ENCODE measurements at regions of chr4 and their contacts with region 1.

Region 1: DNA sequence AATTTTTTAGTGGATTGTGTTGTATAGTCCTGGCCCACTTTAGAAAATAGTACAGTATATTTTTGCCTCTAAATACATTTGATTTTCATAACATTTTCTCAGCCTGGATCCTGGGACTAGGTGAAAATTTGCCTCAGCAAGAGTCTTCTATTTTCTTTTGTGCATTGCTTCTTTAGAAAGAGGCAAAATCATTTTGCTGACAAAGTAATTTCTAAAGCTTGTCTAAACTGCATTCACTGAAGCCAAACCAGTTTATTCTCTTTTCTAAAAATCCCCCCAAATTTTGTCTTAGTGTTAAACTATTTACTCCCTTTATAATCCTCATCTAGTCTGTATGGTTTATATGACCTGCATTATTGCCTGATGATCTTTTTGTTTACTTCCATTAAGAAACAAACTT is 326.3 kb downstream of the C4orf33 start:
- DNase-seq: no peak

Region 2: DNA sequence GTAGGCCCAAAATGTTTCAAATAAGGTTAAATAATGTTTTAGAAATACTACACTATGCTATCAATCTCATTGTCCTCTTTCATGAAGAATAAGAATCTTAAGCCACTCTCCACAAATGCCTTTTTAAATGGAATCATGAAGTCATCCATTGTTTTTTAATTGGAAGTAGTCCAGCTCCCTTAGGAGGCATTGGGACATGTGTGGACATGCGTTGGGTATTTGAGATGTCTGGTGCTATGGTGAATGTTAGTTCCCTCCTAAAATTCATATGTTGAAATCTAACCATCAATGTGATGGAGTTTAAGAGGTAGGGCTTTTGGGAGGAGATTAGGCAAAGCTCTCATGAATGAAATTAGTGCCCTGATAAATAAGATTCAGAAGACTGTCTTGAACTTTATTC is 37.3 kb before region 1 on chr4:
- intact Hi-C with region 1: loop called in 1 of 2 experiments (anchors 2 kb)
- DNase-seq: no peak

Region 3: DNA sequence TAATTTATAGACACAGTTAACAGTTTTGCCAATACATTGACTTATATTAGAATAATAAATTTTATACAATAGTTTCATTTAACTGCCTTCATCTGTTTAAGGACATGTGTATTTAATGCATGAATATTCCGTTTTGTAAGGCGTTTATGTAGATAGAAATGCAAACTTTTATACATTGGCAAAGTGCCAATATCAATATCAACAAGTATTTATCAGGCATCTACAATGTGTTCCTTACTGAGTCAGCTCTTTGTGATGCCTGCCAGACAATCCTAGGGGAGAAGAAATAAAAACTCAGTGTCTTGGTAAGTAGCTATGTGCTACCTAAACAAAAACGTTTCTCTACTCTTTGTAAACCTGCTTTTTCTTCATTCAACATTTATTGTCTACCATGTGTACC is 815.8 kb after region 1 on chr4:
- intact Hi-C with region 1: no loop called
- DNase-seq: no peak

Measured in posterior vena cava (tissue), 2 donors.